ENCODE measurements at regions of chr7 and their contacts with region 1.

Region 1: DNA sequence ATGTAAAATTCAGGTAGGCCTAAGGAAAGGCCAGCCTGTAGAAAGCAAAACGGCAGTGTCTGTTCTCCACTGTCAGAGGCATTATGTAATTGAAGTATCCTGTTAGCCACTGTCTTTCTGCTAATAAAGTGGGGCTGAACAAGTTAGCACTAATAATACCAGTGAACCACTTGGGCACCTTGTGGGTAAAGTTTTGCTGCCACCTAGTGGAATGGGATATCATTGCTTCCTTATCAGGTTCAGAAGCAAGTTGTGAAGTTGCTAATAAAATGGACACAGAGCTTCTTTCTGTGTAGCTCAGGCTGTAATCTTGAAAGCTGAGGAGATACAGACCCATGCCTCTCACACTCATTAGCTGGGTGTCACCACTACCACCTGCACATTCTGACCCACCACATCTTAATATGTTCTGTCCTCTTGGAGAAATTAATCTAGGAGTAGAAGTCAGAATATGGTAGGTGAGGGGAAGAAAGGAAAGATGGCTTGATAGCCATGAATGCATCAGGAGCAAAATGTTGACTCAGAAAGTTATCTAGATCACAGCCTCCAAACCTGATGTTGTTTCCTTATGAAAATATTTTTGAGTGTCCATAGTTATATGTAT is 175.1 kb downstream of the SEPTIN7 start:
- DNase-seq: peak; percentile 59
- H3K4me3 ChIP-seq: no peak overlapping the region
- H3K27ac ChIP-seq: no peak overlapping the region
- H3K4me1 ChIP-seq: peaks cover 4% of the 10 kb centered on the region
- H3K27me3 ChIP-seq: peaks cover 15% of the 10 kb centered on the region
- CTCF ChIP-seq: peak; percentile 86 to 87

Region 2: DNA sequence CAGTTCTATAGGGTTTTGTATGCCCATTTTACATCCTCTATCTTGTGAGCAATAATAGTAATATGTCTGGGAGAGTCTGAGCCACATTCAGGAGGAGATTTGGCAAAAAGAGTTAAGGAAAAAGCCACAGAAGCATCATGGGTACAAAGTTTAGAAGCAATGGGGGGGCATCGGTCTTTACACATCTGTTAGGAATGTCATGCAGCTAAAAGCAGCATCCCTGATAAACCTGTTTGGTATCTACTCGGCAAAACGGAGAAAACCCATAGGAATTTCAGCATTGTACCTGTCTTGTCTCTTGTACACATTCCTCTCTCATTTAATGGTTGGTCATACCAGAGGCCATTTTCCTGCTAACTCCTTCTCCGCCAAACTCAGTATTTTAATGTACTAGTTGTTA is 268.5 kb before region 1 on chr7:
- CTCF ChIA-PET with region 1: no interaction called
- dilution Hi-C with region 1: no loop called
- in situ Hi-C with region 1: no loop called
- intact Hi-C with region 1: loop called (anchors 5 kb)
- DNase-seq: no peak
- H3K4me3 ChIP-seq: no peak overlapping the region
- H3K27ac ChIP-seq: no peak overlapping the region
- H3K4me1 ChIP-seq: no peaks in the 10 kb centered on the region
- H3K27me3 ChIP-seq: no peaks in the 10 kb centered on the region
- CTCF ChIP-seq: no peak